Ovary (tissue), 10 donors: ENCODE measurements at regions of chr14 and their contacts with region 1.

Region 1: DNA sequence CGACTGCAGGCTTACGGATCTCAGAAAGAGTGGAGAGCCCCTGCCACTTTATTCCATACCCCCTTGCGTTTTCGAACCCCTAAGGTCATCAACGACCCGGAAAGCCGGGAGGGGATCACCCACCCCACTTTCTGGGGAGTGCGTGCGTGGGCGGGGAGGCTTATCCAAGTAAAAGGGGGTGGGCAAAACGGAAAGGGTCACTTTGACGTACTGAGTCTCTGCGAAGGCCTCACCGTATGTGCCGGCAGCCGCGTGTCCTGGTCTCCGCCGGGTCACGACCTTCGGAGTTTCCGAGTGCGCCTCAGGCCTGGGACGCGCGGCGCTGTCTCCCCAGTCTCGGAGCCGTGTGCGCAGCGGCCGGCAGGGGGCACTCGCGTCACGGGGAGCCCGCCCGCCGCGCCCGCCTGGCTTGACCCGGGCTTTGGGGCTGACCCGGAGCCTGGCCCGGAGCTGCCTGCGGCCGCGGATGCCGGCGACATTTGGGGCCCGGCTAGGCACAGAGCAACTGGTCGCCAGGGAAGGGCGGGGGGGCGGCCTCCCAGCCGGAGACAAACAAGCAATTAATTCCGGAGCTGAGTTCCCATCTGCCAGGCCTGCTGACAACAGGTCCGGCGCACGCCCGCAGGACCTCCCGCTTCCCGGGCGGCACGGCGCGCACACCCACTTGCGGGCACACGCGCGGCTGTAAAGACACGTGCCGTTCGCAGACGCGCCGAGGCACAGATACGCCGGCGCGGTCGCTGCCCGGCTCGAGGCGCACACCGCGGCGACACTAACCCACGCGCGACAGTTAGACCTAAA is 890 bp upstream of the KIF26A start:
- DNase-seq: peak; percentile 37 to 80 (median 70)
- H3K4me3 ChIP-seq: peak overlapping the region; percentile 37
- H3K27ac ChIP-seq: no peak overlapping the region
- H3K4me1 ChIP-seq: peaks cover 17% of the 10 kb centered on the region
- H3K27me3 ChIP-seq: no peaks in the 10 kb centered on the region
- CTCF ChIP-seq: peak; percentile 77 to 96 (median 92)
- EP300 ChIP-seq: no peak
- POLR2A ChIP-seq: no peak

Region 2: DNA sequence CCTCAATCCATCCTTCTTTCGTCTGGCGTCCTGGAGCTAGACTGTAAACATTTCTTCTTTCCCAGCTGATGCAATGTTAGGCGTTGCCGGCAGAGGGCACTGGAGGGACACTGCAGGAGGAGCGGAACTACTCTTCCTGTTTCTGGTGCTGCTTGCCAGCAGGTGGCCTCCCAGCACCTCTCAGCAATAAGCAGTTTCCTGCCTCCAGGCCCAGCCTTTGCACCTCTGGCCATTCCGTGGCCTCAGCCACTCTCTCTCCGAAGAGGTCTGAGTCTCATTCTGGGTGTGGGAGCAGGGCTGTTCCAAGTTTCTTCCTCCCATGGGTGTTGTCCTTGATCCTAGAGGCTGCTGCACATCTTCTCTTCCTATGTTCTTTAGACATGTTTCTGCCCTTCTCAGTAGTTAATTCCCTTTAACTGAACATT is 59.5 kb before region 1 on chr14:
- intact Hi-C with region 1: loop called in 2 of 4 experiments (anchors 5 to 10 kb)
- DNase-seq: peak; percentile 89 to 94 (median 91)
- H3K4me3 ChIP-seq: no peak overlapping the region
- H3K27ac ChIP-seq: no peak overlapping the region
- H3K4me1 ChIP-seq: no peaks in the 10 kb centered on the region
- H3K27me3 ChIP-seq: no peaks in the 10 kb centered on the region
- CTCF ChIP-seq: peak; percentile 99
- EP300 ChIP-seq: no peak
- POLR2A ChIP-seq: no peak

Region 3: GRCh38 chr14:104341532-104342434 is 204.3 kb after region 1 on chr14:
- intact Hi-C with region 1: loop called in 1 of 4 experiments (anchors 10 kb)
- DNase-seq: peak; percentile 58 to 88 (median 80)
- H3K4me3 ChIP-seq: no peak overlapping the region
- H3K27ac ChIP-seq: no peak overlapping the region
- H3K4me1 ChIP-seq: peaks cover 9% of the 10 kb centered on the region
- H3K27me3 ChIP-seq: no peaks in the 10 kb centered on the region
- CTCF ChIP-seq: peak; percentile 22 to 45 (median 36)
- EP300 ChIP-seq: no peak
- POLR2A ChIP-seq: no peak

Region 4: GRCh38 chr14:104514156-104514848 is 376.8 kb after region 1 on chr14:
- intact Hi-C with region 1: no loop called
- DNase-seq: no peak
- H3K4me3 ChIP-seq: no peak overlapping the region
- H3K27ac ChIP-seq: no peak overlapping the region
- H3K4me1 ChIP-seq: no peaks in the 10 kb centered on the region
- H3K27me3 ChIP-seq: no peaks in the 10 kb centered on the region
- CTCF ChIP-seq: no peak
- EP300 ChIP-seq: no peak
- POLR2A ChIP-seq: no peak

Region 5: GRCh38 chr14:104563742-104564615 is 426.5 kb after region 1 on chr14:
- intact Hi-C with region 1: loop called (anchors 2 to 5 kb)
- DNase-seq: peak; percentile 62 to 84 (median 81)
- H3K4me3 ChIP-seq: no peak overlapping the region
- H3K27ac ChIP-seq: no peak overlapping the region
- H3K4me1 ChIP-seq: no peaks in the 10 kb centered on the region
- H3K27me3 ChIP-seq: no peaks in the 10 kb centered on the region
- CTCF ChIP-seq: peak; percentile 79 to 92 (median 90)
- EP300 ChIP-seq: no peak
- POLR2A ChIP-seq: peak; percentile 21

Region 6: GRCh38 chr14:104639889-104640548 is 502.5 kb after region 1 on chr14:
- intact Hi-C with region 1: loop called in 1 of 4 experiments (anchors 5 kb)
- DNase-seq: peak in 3 of 5 donors; percentile 29 to 62 (median 55)
- H3K4me3 ChIP-seq: no peak overlapping the region
- H3K27ac ChIP-seq: no peak overlapping the region
- H3K4me1 ChIP-seq: no peaks in the 10 kb centered on the region
- H3K27me3 ChIP-seq: no peaks in the 10 kb centered on the region
- CTCF ChIP-seq: peak; percentile 20 to 55 (median 40)
- EP300 ChIP-seq: no peak
- POLR2A ChIP-seq: no peak